RWPE1 (cell line): ENCODE measurements at regions of chr15 and their contacts with region 1.

Region 1: GRCh38 chr15:32035285-32035684 is 5.0 kb downstream of the CHRNA7 start:
- DNase-seq: no peak
- H3K27ac ChIP-seq: no peak overlapping the region
- CTCF ChIP-seq: no peak

Region 2: GRCh38 chr15:31977812-31978661 is 57.2 kb before region 1 on chr15:
- CTCF ChIA-PET with region 1: interaction called, 10 read pairs
- POLR2A ChIA-PET with region 1: no interaction called
- DNase-seq: peak; percentile 53
- H3K27ac ChIP-seq: no peak overlapping the region
- CTCF ChIP-seq: peak; percentile 83